AG04449 (cell line): ENCODE measurements at regions of chr2 and their contacts with region 1.

Region 1: DNA sequence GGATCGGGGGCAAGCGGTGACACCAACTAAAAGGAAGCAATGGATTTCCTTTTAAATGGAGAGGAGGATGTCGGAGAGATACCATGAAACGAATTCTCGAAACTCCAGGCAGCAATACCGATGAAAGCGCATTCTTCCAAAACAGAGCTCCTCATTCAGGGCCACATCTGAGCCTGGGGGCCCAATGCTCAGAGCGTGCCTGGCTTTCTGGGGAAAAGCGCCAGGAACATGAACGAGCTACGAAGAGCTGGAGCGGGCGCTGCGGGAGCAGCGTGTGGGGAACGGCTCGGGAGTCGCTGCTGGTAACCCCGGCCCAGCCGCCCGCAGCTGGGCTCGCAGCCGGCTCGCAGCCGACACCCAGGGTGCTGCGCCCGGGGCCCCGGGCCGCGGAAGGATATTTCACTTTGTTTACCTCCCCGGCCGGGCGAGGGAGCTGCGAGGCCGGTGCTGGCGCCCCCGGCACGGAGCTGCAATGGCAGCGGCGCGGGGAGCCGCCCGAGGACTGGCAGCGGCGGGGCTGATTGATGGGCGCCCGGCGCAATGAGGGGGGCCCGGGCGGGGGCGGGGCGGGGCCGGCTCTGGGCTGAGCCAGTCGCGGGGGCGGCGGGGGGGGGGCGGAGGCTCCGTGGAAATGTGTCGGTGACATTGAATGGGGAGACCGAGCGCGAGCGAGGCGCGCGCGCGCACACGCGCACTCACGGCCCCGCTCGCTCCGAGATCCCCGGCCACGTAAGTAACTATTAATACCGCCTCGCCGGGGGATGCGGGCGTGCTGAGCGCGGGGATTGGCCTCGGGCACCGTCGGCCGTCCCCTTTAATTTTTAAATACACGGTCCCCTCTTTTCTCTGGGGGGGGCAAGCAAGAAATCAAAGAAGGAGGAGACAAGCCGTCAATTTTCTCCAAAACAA is at the start of gene TRIB2:
- DNase-seq: no peak
- H3K4me3 ChIP-seq: peak within 1 kb of the TSS; percentile 86
- CTCF ChIP-seq: peak; percentile 10

Region 2: DNA sequence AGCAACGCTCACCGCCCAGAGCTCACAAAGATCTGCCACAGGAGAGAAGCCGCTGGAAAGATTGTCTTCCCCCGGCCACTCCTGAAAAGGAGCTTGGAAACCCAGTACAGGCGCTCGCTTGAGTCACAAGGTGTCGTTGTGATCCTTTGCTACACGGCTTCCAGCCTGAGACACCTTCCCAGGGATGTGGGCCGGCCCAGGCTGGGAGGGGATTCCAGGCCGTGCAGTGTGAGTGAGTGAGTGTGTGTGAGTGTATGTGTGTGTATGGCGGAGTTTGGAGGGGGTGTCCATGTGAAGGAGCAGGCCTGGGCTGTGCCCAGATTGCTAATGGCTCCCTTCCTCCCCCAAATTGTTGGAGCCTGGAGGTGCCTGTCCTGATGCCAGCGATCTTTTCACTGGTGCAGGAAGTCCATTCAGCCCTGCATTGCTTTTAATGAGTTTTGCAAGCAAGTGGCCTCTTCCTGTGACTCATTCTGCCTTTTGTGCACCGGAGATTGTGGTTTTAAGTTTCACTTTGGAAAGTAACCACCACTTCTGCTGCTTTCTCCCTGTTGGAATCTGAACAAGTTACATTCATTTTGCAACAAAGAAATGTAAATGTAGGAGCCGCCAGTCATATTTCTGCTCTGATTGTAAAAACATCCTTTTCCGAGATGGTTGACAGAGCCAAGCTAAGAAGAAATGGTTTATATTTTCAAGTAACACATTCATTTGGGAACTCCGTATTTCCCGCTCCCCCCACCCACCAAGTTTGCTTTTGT is 886.4 kb before region 1 on chr2:
- CTCF ChIA-PET with region 1: interaction called, 32 read pairs
- POLR2A ChIA-PET with region 1: interaction called, 5 read pairs
- DNase-seq: peak; percentile 93
- H3K4me3 ChIP-seq: peak overlapping the region; percentile 40
- CTCF ChIP-seq: peak; percentile 37

Region 3: GRCh38 chr2:12317814-12318426 is 398.6 kb before region 1 on chr2:
- CTCF ChIA-PET with region 1: interaction called, 9 read pairs
- POLR2A ChIA-PET with region 1: interaction called, 12 read pairs
- DNase-seq: peak; percentile 78
- H3K4me3 ChIP-seq: no peak overlapping the region
- CTCF ChIP-seq: no peak

Region 4: DNA sequence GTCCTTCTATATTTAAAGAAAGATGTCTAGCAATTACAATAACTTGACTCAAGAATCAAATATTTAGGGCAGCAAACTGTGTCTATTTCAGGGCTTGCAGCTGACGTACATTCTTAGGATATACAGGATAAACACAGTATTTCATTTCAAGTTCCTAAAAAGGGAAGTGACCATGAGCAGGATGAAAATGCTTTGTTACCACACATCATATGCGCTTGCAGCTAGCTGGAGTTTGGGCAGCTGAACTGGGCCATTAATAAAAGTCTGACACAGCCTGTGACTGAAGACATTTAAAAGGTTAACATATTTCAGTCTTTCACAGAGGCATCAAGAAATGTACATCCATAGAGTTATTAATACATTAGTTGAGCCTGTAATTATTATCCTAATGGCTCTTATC is 264.3 kb before region 1 on chr2:
- CTCF ChIA-PET with region 1: interaction called, 11 read pairs
- POLR2A ChIA-PET with region 1: interaction called, 3 read pairs
- DNase-seq: peak; percentile 65
- H3K4me3 ChIP-seq: no peak overlapping the region
- CTCF ChIP-seq: no peak

Region 5: DNA sequence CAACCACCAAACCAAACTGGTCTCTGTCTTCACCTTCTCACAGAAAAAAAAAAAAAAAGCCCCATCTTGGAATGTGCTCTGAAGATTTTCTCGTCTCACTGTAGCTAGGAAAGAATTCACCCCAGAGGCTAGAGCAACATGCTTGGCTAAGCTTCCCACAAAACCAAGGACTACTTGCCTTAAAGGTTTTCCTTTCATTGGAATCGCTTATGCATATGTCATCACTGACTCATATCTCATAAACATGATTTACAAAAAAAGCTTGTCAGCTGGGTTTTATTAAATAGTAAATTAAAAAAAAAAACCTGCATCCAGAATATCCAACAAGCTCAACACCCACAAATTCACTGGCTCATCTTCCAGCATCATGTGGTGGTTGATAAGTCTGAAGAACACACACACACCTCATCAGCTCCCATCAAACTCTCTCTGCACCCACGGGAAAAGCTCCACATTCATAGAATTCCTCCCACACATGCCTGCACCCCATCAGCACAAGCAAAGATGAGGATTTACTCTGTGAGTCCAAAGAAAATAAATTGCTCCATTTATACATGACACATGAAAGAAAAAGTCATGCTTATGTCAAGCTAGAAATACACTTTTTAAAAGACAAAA is 181.8 kb before region 1 on chr2:
- CTCF ChIA-PET with region 1: interaction called, 3 read pairs
- POLR2A ChIA-PET with region 1: interaction called, 14 read pairs
- DNase-seq: peak; percentile 98
- H3K4me3 ChIP-seq: peak overlapping the region; percentile 19; the same call in 1 of the 2 replicates
- CTCF ChIP-seq: no peak

Region 6: DNA sequence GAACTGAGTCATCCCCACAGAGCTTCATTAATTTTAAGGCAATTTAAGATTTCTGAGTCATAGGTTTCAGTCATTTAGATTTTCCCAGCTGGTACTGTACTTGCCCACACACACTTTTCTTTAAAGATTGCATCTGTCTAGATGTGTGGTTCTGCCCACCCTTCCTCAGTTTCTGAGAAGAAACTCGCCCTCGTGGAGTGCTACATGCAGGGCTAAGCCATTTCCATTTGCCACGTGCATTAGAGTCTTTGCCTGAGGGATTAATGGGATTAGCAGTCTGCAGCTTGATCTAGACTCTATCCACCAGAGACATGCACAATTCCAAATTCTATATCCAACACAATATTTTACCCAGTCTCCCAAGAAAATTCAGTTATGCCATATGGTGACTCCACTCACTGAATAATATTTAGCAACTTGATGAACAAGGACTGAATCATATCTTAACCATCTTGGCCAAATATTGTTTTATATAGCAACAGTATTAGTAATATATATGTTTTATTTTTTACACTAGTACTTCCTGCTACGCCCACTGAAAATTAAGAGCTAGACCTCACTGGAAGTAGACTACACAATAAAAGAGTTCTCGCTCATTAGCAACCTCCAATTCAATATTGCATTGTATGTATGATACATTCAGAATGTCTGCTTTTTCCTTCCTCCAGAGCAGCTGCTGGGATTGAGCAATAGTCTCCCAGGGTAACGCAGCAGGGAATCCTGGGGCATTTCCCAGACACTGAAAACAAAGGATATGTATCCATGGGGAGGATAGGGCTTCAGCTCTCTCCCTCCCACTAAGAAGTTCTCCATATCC is 14.0 kb before region 1 on chr2:
- CTCF ChIA-PET with region 1: interaction called, 48 read pairs
- POLR2A ChIA-PET with region 1: interaction called, 13 read pairs
- DNase-seq: no peak
- H3K4me3 ChIP-seq: no peak overlapping the region
- CTCF ChIP-seq: no peak

Region 7: DNA sequence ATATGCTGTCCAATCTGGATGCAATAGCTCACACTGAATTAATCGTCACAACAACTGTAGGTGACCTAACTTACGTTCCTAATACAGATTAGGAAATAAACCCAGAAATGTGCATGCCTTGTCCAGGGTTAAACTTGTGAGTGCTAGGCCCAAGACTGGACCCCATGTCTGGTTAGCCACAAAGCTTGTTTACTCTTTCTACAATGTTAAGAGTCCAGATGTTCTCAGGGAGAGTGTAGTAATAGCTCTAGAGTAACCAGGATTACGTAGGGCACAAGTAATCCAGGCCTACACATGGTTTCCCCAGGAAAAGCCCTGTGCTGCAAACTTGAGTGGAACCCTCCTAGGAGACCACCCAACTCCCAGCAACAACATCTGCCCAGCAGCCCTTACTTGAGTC is 26.4 kb after region 1 on chr2:
- CTCF ChIA-PET with region 1: no interaction called
- POLR2A ChIA-PET with region 1: no interaction called
- DNase-seq: no peak
- H3K4me3 ChIP-seq: no peak overlapping the region
- CTCF ChIP-seq: no peak